Dendritic cell treated with granulocyte-macrophage colony-stimulating factor and Interleukin-4, amounts not matched to agents 40 ng/mL and 50 ng/mL, for 4 days (primary cell): ENCODE measurements at regions of chr22 and their contacts with region 1.

Region 1: DNA sequence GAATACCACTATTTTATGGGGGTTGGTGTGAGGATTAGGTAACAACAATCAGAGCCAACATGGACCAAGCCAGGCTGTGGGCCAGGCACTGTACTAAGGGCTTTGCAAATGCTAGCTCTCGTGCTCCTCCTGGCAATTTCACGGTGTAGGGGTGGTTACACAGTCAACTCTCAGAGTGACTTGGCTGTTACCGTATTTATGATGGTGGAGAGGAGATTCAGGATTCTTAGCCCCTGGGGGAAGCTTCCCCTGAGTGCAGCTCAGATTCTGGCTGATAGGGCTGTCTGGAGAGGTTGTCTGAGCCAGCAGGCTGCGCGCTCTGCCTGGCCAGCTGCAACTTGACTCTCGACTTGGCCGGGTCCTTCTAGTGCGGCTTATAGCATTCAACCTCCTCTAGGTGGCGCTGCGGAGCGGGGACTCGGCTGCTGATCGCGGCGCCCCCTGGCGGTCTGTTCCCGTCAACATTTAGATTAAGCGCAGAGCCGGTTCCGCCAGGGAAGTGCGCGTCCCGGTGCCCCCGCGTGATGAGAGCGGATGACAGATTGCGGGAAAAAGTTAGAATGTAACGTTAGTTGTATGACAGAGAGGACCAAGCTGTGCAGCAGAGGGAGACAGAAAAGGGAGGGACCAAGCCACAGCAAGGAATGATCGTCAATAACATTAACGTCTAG is 4.5 kb upstream of the NCF4 start:
- H3K4me3 Mint-ChIP-seq: peak overlapping the region; percentile 63
- H3K27ac Mint-ChIP-seq: peak overlapping the region; percentile 40
- H3K4me1 Mint-ChIP-seq: peaks cover 58% of the 10 kb centered on the region
- H3K27me3 Mint-ChIP-seq: peaks cover 5% of the 10 kb centered on the region

Region 2: DNA sequence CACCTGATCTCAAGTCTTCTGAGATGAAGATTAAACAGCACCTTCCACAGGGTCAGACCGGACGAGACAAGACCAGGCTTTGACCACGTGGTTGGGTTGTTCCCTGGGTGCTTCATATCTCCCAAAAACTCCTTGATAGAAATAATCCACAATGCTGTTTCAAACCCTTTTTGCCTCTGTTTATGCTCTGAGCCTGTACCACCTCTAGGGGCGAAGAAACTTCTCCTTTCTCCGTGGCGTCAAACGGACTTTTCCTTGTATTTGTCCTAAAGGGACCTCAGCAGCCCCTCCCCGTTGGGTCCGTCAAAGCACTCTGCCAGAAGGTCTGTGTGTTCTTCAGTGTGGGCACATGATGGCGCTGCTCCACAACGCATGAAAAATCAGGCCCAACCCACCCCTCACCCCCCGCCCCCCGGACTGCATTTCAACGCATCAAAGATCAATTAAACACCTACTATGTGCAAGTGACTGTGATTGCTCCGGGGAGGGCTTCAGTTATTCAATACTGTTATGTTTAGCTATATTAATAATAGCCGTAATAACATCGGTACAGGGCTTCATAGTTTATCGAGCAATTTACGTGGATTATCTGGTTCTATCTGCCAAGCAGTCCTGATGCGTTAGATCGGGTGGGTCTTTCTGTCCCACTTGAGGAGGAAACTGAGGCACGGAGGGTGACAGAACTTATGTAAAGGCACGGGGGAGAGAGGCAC is 310.0 kb before region 1 on chr22:
- intact Hi-C with region 1: loop called (anchors 5 kb)
- H3K4me3 Mint-ChIP-seq: no peak overlapping the region
- H3K27ac Mint-ChIP-seq: no peak overlapping the region
- H3K4me1 Mint-ChIP-seq: peaks cover 23% of the 10 kb centered on the region
- H3K27me3 Mint-ChIP-seq: peaks cover 22% of the 10 kb centered on the region

Region 3: GRCh38 chr22:36781656-36782627 is 74.3 kb before region 1 on chr22:
- intact Hi-C with region 1: loop called (anchors 1 kb)
- H3K4me3 Mint-ChIP-seq: no peak overlapping the region
- H3K27ac Mint-ChIP-seq: no peak overlapping the region
- H3K4me1 Mint-ChIP-seq: peaks cover 13% of the 10 kb centered on the region
- H3K27me3 Mint-ChIP-seq: peaks cover 33% of the 10 kb centered on the region

Region 4: GRCh38 chr22:36839356-36840073 is 16.7 kb before region 1 on chr22:
- intact Hi-C with region 1: no loop called
- H3K4me3 Mint-ChIP-seq: no peak overlapping the region
- H3K27ac Mint-ChIP-seq: no peak overlapping the region
- H3K4me1 Mint-ChIP-seq: peaks cover 10% of the 10 kb centered on the region
- H3K27me3 Mint-ChIP-seq: peaks cover 83% of the 10 kb centered on the region

Region 5: GRCh38 chr22:36913427-36914389 is 57.5 kb after region 1 on chr22 and contains the start of gene CSF2RB:
- intact Hi-C with region 1: loop called (anchors 2 kb)
- H3K4me3 Mint-ChIP-seq: peak within 1 kb of the TSS; percentile 92
- H3K27ac Mint-ChIP-seq: peak within 1 kb of the TSS; percentile 93
- H3K4me1 Mint-ChIP-seq: peaks cover 63% of the 10 kb centered on the region
- H3K27me3 Mint-ChIP-seq: no peaks in the 10 kb centered on the region

Region 6: DNA sequence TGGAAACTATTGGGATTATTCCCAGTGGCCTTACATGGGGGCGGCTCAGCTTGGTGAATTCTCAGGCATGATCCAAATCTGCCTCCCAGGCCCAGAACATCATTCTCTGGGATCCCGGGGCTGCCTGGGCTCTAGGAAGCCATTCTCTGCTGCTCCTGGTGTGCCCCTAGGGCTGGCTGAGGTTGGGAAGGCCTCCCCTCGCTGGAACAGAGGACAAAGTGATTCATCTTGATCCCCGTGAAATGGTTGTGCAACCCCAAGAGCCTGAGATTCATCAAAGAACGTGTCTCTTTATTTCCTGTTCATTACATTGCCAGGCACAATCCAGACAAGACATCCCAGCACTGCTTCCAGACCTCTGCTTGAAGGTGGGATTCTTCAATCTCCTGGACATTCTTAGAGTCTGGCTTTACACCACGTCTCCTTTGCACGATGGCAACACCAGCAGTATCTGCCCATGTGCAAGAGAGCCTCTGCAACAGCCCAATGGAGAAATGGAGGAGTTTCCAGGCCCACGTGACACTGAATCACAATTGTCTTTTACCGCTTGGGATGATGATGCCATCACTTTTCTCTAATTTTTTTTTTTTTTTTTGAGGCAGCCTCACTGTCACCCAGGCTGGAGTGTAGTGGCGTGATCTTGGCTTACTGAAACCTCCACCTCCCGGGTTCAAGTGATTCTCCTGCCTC is 110.7 kb after region 1 on chr22:
- intact Hi-C with region 1: loop called (anchors 5 kb)
- H3K4me3 Mint-ChIP-seq: no peak overlapping the region
- H3K27ac Mint-ChIP-seq: no peak overlapping the region
- H3K4me1 Mint-ChIP-seq: peaks cover 46% of the 10 kb centered on the region
- H3K27me3 Mint-ChIP-seq: peaks cover 2% of the 10 kb centered on the region

Region 7: GRCh38 chr22:36977947-36978660 is 121.8 kb after region 1 on chr22:
- intact Hi-C with region 1: loop called (anchors 1 kb)
- H3K4me3 Mint-ChIP-seq: peak overlapping the region; percentile 74
- H3K27ac Mint-ChIP-seq: peak overlapping the region; percentile 87
- H3K4me1 Mint-ChIP-seq: peaks cover 29% of the 10 kb centered on the region
- H3K27me3 Mint-ChIP-seq: peaks cover 26% of the 10 kb centered on the region